Left cardiac atrium (tissue), 4 donors: ENCODE measurements at regions of chr17 and their contacts with region 1.

Region 1: GRCh38 chr17:28097901-28098300 is 55.4 kb downstream of the NLK start:
- DNase-seq: no peak
- ATAC-seq: no peak

Region 2: DNA sequence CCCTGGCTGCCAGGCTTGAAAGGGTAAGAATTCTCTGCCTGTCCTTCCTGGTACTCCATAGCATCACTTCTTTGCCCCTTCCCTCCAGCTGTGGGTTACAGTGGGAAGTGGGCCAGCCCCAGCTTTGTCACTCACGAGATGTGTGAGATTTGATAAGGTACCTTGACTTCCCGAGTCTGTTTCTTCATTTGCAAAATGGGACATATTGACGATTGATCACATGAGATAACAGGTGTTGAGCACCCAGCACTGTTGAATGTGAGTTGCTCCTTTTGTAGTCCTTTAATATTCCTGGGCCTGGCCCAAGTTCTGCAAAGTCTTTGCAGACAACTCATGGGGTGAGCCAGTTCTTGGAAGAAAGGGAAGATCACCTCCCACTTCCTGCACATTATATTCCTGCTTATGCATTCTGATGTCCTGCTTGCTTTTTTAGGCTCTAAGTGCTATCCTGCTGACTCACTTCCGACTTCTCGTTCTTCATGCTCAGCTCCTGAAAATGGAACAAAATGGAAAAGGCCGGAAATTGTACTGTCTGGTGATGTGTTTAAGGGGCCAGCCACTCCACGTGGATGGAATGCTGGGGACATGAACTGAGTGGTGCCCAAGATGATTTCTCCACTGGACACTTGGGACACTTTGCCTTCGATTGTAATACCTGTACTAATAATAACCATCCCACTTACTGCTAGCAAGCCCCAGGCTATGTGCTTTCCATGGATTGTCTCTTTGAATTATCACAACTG is 63.8 kb before region 1 on chr17:
- intact Hi-C with region 1: loop called in 1 of 2 experiments (anchors 10 kb)
- DNase-seq: no peak
- ATAC-seq: peak; percentile 23 to 67

Region 3: GRCh38 chr17:28318759-28319660 is 221.1 kb after region 1 on chr17 and contains the start of gene TMEM97:
- intact Hi-C with region 1: no loop called
- DNase-seq: peak; percentile 97
- ATAC-seq: peak; percentile 99 to 100
- total RNA-seq, gene TMEM97: 5.4 to 6.0 TPM